ENCODE measurements at regions of chr3 and their contacts with region 1.

Region 1: GRCh38 chr3:30286007-30286669 is 320.3 kb upstream of the TGFBR2 start:
- DNase-seq: no peak
- H3K4me3 Mint-ChIP-seq: no peak overlapping the region
- H3K27ac Mint-ChIP-seq: peak overlapping the region; percentile 3
- H3K4me1 Mint-ChIP-seq: peaks cover 57% of the 10 kb centered on the region
- H3K27me3 Mint-ChIP-seq: no peaks in the 10 kb centered on the region

Region 2: DNA sequence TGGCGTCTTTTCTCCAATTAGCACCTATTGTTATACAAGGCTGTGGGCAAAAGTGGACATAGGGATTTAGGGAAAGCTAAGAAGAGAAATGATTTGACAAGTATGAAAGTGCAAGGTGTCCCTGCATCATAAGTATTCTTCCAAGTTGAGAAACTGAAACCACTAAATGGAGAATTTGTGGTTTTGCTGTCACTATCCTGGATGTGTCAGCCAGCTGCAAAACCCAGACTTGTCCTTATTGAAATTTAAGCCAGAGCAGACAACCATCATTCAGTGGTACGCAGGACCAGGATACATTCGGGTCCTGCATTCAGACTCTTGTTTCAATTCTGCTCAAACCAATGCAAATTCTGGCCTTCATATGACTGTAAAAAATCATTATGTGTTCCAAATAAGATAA is 64.5 kb before region 1 on chr3:
- intact Hi-C with region 1: loop called (anchors 5 kb)
- DNase-seq: no peak
- H3K4me3 Mint-ChIP-seq: no peak overlapping the region
- H3K27ac Mint-ChIP-seq: no peak overlapping the region
- H3K4me1 Mint-ChIP-seq: peaks cover 34% of the 10 kb centered on the region
- H3K27me3 Mint-ChIP-seq: peaks cover 3% of the 10 kb centered on the region

Region 3: GRCh38 chr3:30248423-30248822 is 37.7 kb before region 1 on chr3:
- intact Hi-C with region 1: loop called (anchors 5 kb)
- DNase-seq: no peak
- H3K4me3 Mint-ChIP-seq: no peak overlapping the region
- H3K27ac Mint-ChIP-seq: no peak overlapping the region
- H3K4me1 Mint-ChIP-seq: peaks cover 14% of the 10 kb centered on the region
- H3K27me3 Mint-ChIP-seq: peaks cover 4% of the 10 kb centered on the region

Region 4: GRCh38 chr3:30306896-30307295 is 20.8 kb after region 1 on chr3:
- intact Hi-C with region 1: no loop called
- DNase-seq: no peak
- H3K4me3 Mint-ChIP-seq: no peak overlapping the region
- H3K27ac Mint-ChIP-seq: no peak overlapping the region
- H3K4me1 Mint-ChIP-seq: peaks cover 6% of the 10 kb centered on the region
- H3K27me3 Mint-ChIP-seq: no peaks in the 10 kb centered on the region

Region 5: DNA sequence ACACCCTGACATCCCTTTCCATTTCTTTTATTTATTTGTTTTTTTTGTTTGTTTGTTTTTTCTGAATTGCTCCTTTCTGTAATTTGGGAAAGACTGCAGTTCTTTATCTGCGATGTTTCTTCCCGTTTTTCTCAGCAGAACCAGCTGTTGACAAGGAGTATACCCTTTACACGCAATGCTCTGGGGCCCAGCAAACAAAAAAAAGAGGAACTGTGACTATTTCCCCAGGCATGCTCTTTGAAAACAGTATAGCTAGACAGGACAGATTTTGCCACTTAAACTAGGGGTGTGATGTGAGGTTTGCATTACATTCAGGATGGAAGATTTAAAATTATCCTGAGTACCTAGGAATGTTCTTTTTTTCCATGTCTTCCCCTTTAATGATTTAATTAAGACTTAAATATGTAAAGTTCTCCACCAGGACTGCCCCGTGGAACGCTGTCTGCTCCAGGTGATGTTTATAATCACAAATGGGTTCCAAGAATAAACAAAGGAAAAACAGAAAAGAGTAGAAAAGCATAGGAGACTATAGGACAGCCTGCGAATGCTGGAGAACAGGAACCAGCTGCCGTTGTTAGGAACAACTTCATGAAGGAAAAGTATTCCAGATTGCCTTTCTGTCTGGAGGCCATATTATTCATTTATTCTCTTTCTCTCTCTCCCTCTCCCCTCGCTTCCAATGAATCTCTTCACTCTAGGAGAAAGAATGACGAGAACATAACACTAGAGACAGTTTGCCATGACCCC is 363.6 kb after region 1 on chr3:
- intact Hi-C with region 1: no loop called
- DNase-seq: no peak
- H3K4me3 Mint-ChIP-seq: no peak overlapping the region
- H3K27ac Mint-ChIP-seq: peak overlapping the region; percentile 67
- H3K4me1 Mint-ChIP-seq: peaks cover 96% of the 10 kb centered on the region
- H3K27me3 Mint-ChIP-seq: no peaks in the 10 kb centered on the region